ENCODE measurements at regions of chr5 and their contacts with region 1.

Region 1: GRCh38 chr5:80255732-80256479 is at the start of gene SERINC5:
- DNase-seq: peak; percentile 83 to 90 (median 87)
- H3K4me3 ChIP-seq: peak within 1 kb of the TSS; percentile 62 to 83 (median 71)
- H3K27ac ChIP-seq: peak within 1 kb of the TSS; percentile 89 to 99 (median 96)
- H3K4me1 ChIP-seq: peaks cover 32 to 52% of the 10 kb centered on the region in 2 donors
- H3K27me3 ChIP-seq: no peaks in the 10 kb centered on the region
- CTCF ChIP-seq: peak in 1 of 6 experiments; percentile 11
- POLR2A ChIP-seq: peak; percentile 88 to 94
- total RNA-seq, gene SERINC5: 25.7 to 258 (median 96.7) TPM

Region 2: DNA sequence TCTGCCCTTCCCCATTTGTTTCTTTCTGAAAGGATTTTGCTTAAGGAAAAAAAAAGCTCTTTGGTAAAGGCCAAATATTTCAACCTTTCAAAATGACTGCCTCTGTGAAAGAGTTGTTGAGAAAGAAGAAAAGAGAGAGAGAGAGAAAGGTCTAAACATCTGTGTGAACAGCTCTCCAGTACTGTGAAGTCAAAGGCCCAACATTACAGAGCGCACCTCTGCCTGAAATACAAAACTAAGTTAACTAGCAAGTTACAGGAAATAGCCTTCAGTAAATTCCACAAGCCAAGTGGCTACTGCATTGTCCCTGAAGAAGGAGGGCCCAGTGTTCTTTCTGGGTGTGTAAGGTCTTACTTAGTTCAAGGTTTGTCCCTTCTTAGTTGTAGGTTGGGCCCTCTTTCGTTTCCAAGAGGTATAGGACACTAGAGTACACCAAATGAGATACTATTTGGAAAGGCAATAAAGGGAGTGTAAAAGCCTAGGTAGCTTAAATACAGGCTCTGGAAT is 116.4 kb before region 1 on chr5:
- intact Hi-C with region 1: loop called in 1 of 2 experiments (anchors 10 kb)
- DNase-seq: peak in 2 of 7 donors; percentile 6 to 25
- H3K4me3 ChIP-seq: no peak overlapping the region
- H3K27ac ChIP-seq: peak overlapping the region in 3 of 5 donors; percentile 6 to 94 (median 42)
- H3K4me1 ChIP-seq: peaks cover 21 to 35% of the 10 kb centered on the region in 2 donors
- H3K27me3 ChIP-seq: no peaks in the 10 kb centered on the region
- CTCF ChIP-seq: no peak
- POLR2A ChIP-seq: no peak

Region 3: DNA sequence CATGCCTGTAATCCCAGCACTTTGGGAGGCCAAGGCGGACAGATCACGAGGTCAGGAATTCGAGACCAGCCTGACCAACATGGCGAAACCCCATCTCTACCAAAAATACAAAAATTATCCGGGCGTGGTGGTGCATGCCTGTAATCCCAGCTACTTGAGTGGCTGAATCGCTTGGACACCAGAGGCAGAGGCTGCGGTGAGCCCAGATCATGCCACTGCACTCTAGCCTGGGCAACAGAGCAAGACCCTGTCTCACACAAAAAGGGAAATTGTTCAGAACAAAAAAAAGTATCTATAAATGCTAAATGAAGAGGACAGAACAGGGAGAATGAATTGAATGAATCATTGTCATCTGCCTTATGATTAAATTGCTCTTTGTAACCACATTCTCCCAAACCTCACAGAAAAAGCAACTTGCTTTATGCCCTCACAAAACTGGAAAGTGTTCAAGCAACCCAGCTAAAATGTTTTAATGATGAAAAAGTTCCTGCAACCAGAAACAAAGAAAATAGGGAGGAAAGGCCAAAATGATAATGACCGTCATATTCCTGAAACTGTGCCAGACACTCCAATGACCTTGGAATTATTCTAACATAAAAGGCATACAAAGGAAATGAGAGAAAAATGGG is 83.7 kb before region 1 on chr5:
- intact Hi-C with region 1: loop called in 1 of 2 experiments (anchors 10 kb)
- DNase-seq: peak in 2 of 7 donors; percentile 37 to 49
- H3K4me3 ChIP-seq: no peak overlapping the region
- H3K27ac ChIP-seq: peak overlapping the region; percentile 7 to 79 (median 60)
- H3K4me1 ChIP-seq: peaks cover 33 to 37% of the 10 kb centered on the region in 2 donors
- H3K27me3 ChIP-seq: no peaks in the 10 kb centered on the region
- CTCF ChIP-seq: no peak
- POLR2A ChIP-seq: no peak

Measured in adrenal gland (tissue), 19 donors.